Brain microvascular endothelial cell (primary cell): ENCODE measurements at regions of chr15 and their contacts with region 1.

Region 1: GRCh38 chr15:65638681-65639089 is 16.9 kb downstream of the SLC24A1 start:
- DNase-seq: peak; percentile 47
- H3K4me3 ChIP-seq: no peak overlapping the region
- H3K27ac ChIP-seq: no peak overlapping the region
- H3K27me3 ChIP-seq: no peaks in the 10 kb centered on the region
- CTCF ChIP-seq: peak; percentile 85

Region 2: GRCh38 chr15:65384895-65385858 is 253.5 kb before region 1 on chr15:
- in situ Hi-C with region 1: no loop called
- DNase-seq: peak; percentile 78
- H3K4me3 ChIP-seq: peak overlapping the region; percentile 37
- H3K27ac ChIP-seq: no peak overlapping the region
- H3K27me3 ChIP-seq: peaks cover under 1% of the 10 kb centered on the region
- CTCF ChIP-seq: peak; percentile 97

Region 3: DNA sequence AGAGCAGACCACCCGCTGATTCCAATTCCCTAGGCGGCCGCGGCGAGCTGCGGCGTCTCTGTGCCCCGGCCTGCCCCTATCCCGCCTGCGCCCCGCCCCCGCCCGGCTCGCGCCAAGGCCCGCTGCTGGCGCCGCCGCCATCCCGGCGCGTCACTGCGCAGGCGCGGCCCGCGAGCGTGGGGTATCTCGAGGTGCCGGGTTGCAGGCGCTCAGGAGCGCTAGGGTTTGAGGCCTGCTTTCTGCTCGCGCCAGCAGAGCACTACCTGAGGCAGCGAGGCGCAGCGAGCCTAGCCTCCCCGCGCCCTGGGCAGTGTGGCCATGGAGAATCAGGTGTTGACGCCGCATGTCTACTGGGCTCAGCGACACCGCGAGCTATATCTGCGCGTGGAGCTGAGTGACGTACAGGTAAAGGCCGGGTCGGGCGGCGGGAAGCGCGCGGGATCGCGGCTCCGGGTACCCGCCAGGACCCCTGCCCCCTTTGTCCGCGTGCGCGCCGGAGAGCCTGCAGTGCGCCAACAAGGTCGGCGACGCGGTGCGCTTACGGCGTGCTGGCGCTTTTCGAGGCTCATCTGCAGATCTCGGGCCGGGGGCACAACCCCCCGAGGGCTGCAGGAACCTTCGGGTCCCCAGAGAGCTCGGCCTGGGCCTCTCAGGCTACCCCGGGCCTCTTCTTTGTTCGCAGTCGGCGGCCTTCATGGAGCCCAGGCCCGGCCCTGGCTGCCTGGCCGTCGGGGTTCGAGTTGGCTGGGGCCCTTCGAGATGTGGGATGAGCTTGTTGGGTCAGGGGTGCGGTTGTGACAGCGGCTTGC is 108.2 kb before region 1 on chr15 and contains the start of gene HACD3:
- in situ Hi-C with region 1: no loop called
- DNase-seq: peak; percentile 32
- H3K4me3 ChIP-seq: peak within 1 kb of the TSS; percentile 87
- H3K27ac ChIP-seq: peak within 1 kb of the TSS; percentile 62
- H3K27me3 ChIP-seq: no peaks in the 10 kb centered on the region
- CTCF ChIP-seq: no peak

Region 4: GRCh38 chr15:65869127-65869953 is 230.7 kb after region 1 on chr15 and contains the start of gene RAB11A:
- in situ Hi-C with region 1: loop called (anchors 25 kb)
- DNase-seq: peak; percentile 91
- H3K4me3 ChIP-seq: peak within 1 kb of the TSS; percentile 97
- H3K27ac ChIP-seq: peak within 1 kb of the TSS; percentile 80
- H3K27me3 ChIP-seq: no peaks in the 10 kb centered on the region
- CTCF ChIP-seq: peak; percentile 45